ENCODE measurements at regions of chr13 and their contacts with region 1.

Region 1: DNA sequence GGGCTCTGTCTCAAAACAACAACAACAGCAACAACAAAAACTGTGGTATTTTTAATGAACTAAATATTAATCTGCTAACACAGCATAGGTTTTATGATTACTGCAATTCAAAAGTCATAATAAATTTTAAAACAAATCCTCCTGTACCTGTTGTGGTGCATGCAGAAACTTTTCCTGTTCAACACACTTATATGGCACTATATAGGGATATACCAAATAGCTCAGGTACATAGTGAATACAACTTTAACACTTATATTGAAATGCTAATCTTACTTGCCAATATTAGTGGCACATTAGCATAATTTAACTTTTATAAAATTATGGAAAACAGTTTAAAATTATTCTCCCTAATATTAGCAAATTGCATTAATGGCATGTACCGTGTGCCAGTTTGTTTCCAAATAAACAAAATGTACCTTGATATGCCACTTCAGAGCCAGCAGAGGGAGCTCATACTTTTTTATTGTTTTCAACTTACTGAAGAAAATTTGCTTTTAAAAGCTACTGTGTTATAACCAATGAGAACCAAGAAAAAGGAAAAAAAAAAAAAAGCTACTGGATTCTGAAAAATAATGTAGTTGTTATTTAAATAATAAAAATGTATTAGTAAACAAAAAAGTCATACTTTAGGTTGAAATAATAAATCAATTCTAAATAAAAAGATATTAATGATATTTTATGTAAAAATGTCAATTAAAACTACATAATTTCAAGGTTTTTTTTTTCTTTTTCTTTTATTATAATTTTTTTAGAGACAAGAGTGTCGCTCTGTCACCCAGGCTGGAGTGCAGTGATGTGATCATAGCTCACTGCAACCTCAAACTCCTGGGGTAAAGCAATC is 18.0 kb upstream of the RBM26 start:
- DNase-seq: peak; percentile 29
- ATAC-seq: peak; percentile 56; the same call in 2 of the 3 replicates
- H3K4me3 ChIP-seq: no peak overlapping the region
- H3K27ac ChIP-seq: no peak overlapping the region
- H3K4me1 ChIP-seq: no peaks in the 10 kb centered on the region
- H3K27me3 ChIP-seq: no peaks in the 10 kb centered on the region
- CTCF ChIP-seq: peak; percentile 62
- EP300 ChIP-seq: no peak
- POLR2A ChIP-seq: no peak
- RAD21 ChIP-seq: 0 out of 2 replicates have a peak, but pooled peaks have one; percentile 40

Region 2: DNA sequence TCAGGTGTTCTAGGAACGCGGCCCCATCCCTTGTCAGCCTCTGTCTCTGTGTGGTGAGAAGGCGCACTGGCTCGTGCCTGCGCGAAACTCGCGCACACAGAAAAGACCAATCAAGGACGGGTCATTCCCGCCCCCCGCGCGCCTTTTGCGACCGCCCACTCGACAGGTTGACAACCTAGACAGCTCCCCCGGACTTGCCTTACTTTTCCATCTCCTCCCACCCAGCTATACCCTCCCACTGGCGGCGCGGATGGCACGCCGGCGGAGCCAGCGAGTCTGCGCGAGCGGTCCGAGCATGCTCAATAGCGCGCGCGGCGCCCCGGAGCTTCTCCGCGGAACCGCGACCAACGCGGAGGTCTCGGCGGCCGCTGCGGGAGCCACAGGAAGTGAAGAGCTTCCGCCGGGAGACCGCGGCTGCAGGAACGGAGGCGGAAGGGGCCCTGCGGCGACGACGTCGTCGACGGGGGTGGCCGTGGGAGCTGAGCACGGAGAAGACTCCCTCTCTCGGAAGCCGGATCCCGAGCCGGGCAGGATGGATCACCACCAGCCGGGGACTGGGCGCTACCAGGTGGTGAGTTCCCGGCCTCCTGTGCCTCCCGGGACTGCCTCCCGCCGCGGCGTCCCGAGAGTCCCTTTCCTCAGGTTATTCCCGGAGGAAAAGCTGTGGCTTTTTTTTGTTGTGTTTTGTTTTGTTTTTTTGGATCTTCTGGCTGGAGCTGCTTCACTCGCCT is 57.1 kb after region 1 on chr13 and contains the start of gene NDFIP2:
- CTCF ChIA-PET with region 1: no interaction called
- POLR2A ChIA-PET with region 1: no interaction called
- in situ Hi-C with region 1: no loop called
- intact Hi-C with region 1: loop called (anchors 5 kb)
- DNase-seq: peak; percentile 76
- ATAC-seq: peak; percentile 93
- H3K4me3 ChIP-seq: peak within 1 kb of the TSS; percentile 72 to 91 (median 84)
- H3K27ac ChIP-seq: peak within 1 kb of the TSS; percentile 81
- H3K4me1 ChIP-seq: peaks cover 55% of the 10 kb centered on the region
- H3K27me3 ChIP-seq: no peaks in the 10 kb centered on the region; a peak in 1 of 5 replicates
- CTCF ChIP-seq: peak; percentile 30; the same call in 1 of the 2 replicates
- EP300 ChIP-seq: no peak
- POLR2A ChIP-seq: peak; percentile 75 to 83
- RAD21 ChIP-seq: 0 out of 2 replicates have a peak, but pooled peaks have one; percentile 14
- total RNA-seq, gene NDFIP2: 32.0 and 32.6 TPM in 2 replicates

Region 3: DNA sequence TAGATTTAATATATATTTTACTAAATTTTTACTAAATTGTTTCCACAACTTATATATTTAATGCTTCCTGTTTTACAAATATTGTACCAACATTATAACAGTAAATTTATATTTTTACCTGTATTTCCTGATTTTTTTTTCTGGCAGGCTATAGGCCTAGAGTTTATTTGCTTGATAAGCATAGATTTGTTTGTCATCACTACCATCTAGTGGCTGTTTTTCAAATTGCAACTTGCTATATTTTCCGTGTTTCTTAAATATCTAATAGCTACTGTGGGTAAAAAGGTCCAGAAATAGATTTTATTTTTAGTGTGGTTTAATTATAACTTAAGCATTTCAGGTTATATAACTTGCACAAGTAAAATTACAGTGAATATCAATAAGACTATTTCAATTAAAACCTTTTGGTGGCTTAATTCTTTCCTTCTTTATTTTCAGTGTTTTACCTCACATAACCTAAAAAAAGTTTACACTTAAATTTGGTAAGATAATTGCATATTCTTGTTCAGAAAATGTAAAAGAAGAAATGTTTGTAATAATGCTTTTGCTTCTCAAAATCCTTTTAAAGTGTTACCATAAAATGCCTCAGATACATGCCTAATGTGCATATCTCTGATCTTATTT is 117.5 kb after region 1 on chr13:
- CTCF ChIA-PET with region 1: interaction called, 59 read pairs
- POLR2A ChIA-PET with region 1: interaction called, 3 read pairs
- in situ Hi-C with region 1: loop called (anchors 5 kb)
- intact Hi-C with region 1: loop called (anchors 1 kb)
- DNase-seq: peak; percentile 62
- ATAC-seq: peak; percentile 53; the same call in 2 of the 3 replicates
- H3K4me3 ChIP-seq: no peak overlapping the region
- H3K27ac ChIP-seq: no peak overlapping the region
- H3K4me1 ChIP-seq: no peaks in the 10 kb centered on the region
- H3K27me3 ChIP-seq: no peaks in the 10 kb centered on the region
- CTCF ChIP-seq: peak; percentile 61
- EP300 ChIP-seq: no peak
- POLR2A ChIP-seq: no peak
- RAD21 ChIP-seq: peak; percentile 43; the same call in 1 of the 2 replicates

Region 4: GRCh38 chr13:79604752-79605151 is 180.7 kb after region 1 on chr13:
- CTCF ChIA-PET with region 1: no interaction called
- POLR2A ChIA-PET with region 1: no interaction called
- in situ Hi-C with region 1: no loop called
- intact Hi-C with region 1: no loop called
- DNase-seq: no peak
- ATAC-seq: no peak
- H3K4me3 ChIP-seq: no peak overlapping the region
- H3K27ac ChIP-seq: no peak overlapping the region
- H3K4me1 ChIP-seq: no peaks in the 10 kb centered on the region
- H3K27me3 ChIP-seq: no peaks in the 10 kb centered on the region
- CTCF ChIP-seq: no peak
- EP300 ChIP-seq: no peak
- POLR2A ChIP-seq: no peak
- RAD21 ChIP-seq: no peak

Measured in HepG2 (cell line).